ENCODE measurements at regions of chr15 and their contacts with region 1.

Region 1: DNA sequence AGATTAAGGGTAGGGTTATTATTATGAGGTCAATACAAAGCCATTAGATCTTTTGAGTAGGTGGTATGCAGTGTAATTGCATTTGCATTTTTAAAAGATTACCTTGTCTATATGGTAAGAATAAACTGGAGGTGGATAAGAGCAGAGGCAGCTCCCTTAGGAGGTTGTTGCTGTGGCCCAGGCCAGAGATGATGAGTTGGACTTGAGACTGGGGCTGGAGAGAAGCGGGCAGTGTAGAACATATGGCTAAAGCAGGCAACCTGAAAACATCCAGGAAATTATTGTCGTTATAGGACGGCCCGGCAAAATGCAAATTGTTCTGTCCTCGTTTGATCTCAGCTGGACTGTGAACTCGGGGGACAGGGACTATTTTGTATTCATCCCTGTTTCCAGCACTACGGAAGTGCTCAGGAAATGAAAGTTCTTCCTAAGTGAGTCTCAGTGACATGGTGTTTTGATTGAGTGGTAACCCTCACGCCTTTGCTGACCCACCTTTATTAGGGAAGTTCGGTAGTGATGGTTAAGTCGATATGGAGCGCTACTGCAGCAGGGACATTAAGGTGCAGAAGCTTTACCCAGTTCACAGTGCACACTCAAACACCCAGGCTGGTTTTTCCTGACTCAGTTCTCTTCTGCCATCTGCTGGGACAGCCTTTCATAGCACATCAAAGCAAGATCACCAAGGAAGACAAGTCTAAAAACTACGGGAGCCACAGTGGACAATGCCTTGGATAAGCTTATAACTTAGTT is 27.2 kb upstream of the VPS33B start:
- ATAC-seq: peak; percentile 78 to 98 (median 88)
- H3K4me3 ChIP-seq: no peak overlapping the region
- H3K27ac ChIP-seq: no peak overlapping the region
- H3K4me1 ChIP-seq: no peaks in the 10 kb centered on the region

Region 2: GRCh38 chr15:90286678-90287077 is 762.9 kb before region 1 on chr15:
- in situ Hi-C with region 1: no loop called
- ATAC-seq: peak in 3 of 8 experiments; percentile 57 to 69 (median 59)
- H3K4me3 ChIP-seq: no peak overlapping the region
- H3K27ac ChIP-seq: no peak overlapping the region
- H3K4me1 ChIP-seq: peaks cover 0 to 5% of the 10 kb centered on the region in 2 donors

Region 3: DNA sequence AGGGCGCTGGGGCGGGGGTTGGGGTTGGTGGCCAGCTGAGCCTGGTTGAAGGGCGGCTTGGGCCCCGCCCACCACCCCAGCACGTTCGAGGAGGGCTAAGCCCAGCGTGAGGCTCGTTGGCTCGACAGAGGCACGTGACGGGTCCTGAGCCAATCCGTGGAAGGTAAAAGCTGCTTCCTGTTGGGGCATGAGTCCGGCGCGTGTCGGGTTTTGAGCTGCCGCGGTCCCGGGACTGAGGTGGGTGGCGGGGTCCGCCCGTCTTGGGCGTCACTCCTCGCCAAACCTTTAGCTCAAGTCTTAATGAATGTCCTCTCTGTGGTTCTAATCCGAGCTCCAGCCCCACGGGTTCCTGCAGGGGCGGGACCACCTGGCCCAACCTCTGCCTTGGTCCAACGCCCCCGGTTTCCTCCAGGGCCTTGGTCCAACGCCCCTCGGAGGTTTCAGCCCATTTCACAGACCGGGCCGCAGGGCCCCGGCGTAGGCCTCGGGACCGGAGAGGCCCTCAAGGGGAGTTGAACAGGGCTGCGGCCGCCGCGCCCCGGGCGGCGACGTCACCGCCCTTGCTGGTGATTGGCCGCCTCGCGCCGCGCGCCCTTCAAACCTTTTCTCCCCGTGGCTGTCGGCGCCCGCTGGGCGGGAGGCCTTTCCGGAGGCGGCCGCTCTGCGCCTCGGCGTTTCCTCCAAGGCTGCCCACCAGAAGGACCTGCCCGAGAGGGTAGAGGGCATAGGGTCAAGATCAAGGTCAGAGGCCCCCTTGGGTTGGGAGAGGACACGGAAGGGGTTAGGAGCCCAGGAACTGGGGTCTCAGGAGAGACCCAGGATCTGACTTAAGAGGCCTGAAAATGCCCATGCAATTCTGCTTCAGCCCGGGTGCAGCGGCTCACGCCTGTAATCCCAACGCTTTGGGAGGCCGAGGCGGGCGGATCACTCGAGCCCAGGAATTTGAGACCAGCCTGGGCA is 94.6 kb before region 1 on chr15 and contains the start of gene RCCD1:
- in situ Hi-C with region 1: loop called in 1 of 9 experiments (anchors 10 kb)
- ATAC-seq: peak; percentile 86 to 93 (median 90)
- H3K4me3 ChIP-seq: peak within 1 kb of the TSS; percentile 55 to 92 (median 61)
- H3K27ac ChIP-seq: peak within 1 kb of the TSS; percentile 55 to 73
- H3K4me1 ChIP-seq: peaks cover 7 to 12% of the 10 kb centered on the region in 2 donors
- total RNA-seq, gene RCCD1: 5.7 to 16.8 (median 6.7) TPM

Region 4: DNA sequence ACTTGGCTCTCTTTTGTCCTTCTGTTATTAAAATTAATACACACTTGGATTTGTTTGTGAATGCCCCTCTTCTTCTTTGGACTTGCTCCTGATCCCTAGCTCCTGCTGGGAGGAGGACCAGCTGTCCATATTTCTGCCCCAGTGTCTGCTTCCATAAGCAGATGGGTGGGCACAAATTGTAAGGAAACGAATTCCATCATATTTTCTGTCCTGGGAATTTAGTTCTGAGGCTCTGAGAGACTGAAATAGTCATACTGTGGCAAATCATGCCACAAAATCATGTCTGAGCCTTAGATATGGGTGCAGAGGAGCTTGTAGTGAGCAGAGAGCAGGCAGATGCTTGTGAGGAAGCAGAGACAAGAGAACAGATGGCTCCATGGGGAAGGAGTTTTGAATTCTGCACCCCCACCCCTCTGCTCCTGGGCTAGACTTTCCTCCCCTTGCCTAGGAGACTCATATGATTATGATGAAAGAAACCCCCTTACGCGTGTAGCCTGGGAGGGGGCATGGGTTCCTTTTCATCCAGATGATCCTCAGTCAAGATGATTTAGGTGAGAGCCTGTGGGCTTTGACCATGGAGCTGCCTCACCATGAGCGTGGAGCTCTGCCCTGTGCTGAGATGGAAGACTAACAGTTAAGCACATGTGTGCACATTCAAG is 101.1 kb after region 1 on chr15:
- in situ Hi-C with region 1: no loop called
- ATAC-seq: peak in 3 of 8 experiments; percentile 11 to 24 (median 16)
- H3K4me3 ChIP-seq: no peak overlapping the region
- H3K27ac ChIP-seq: no peak overlapping the region
- H3K4me1 ChIP-seq: peaks cover 6 to 15% of the 10 kb centered on the region in 2 donors

Region 5: DNA sequence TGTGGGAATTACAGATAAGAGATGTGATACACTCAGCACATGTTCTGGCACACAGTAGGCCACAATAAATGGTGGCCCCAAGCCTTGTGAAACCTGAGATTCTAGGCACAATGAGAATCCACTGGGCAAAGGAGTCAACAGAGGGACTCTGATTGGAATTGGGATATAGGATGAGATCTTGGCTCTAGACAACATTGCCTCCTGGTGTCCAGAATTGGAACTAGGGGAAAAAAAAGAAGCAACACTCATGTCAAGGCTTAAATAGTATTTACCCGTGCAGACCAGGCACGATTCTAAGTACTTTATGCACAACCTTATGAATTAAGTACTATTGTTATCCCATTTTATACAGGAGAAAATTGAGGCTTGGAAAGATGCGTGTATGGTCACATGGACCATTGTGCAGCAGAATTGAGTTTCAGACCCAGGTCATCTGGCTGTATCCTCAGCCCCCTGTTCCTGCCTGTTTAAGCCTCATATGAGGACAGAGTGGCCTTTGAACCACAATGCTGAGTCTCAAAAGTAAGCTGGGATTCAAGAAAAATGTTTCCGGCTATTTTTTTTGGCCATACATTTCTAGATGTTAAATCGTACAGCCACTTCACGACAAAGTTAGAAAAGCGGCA is 175.3 kb after region 1 on chr15:
- in situ Hi-C with region 1: loop called in 5 of 9 experiments (anchors 10 to 25 kb)
- ATAC-seq: peak in 4 of 8 experiments; percentile 52 to 78 (median 68)
- H3K4me3 ChIP-seq: no peak overlapping the region
- H3K27ac ChIP-seq: no peak overlapping the region
- H3K4me1 ChIP-seq: peaks cover 0 to 11% of the 10 kb centered on the region in 2 donors

Region 6: GRCh38 chr15:91243820-91244219 is 194.3 kb after region 1 on chr15:
- in situ Hi-C with region 1: loop called in 5 of 9 experiments (anchors 10 to 25 kb)
- ATAC-seq: peak in 1 of 8 experiments; percentile 17
- H3K4me3 ChIP-seq: no peak overlapping the region
- H3K27ac ChIP-seq: no peak overlapping the region
- H3K4me1 ChIP-seq: peaks cover 5% of the 10 kb centered on the region in 2 donors

Region 7: GRCh38 chr15:91271565-91272153 is 222.1 kb after region 1 on chr15:
- in situ Hi-C with region 1: loop called in 2 of 9 experiments (anchors 10 to 25 kb)
- ATAC-seq: peak; percentile 63 to 90 (median 75)
- H3K4me3 ChIP-seq: no peak overlapping the region
- H3K27ac ChIP-seq: no peak overlapping the region
- H3K4me1 ChIP-seq: no peaks in the 10 kb centered on the region

Measured in motor neuron (in vitro differentiated cells).